AG04449 (cell line): ENCODE measurements at regions of chr3 and their contacts with region 1.

Region 1: GRCh38 chr3:50620420-50620819 is 3.5 kb downstream of the MAPKAPK3 start:
- DNase-seq: no peak
- H3K4me3 ChIP-seq: no peak overlapping the region
- CTCF ChIP-seq: no peak

Region 2: GRCh38 chr3:51311055-51311454 is 690.6 kb after region 1 on chr3:
- CTCF ChIA-PET with region 1: interaction called, 33 read pairs
- POLR2A ChIA-PET with region 1: no interaction called
- DNase-seq: peak; percentile 7
- H3K4me3 ChIP-seq: no peak overlapping the region
- CTCF ChIP-seq: peak; percentile 32